CD4-positive, alpha-beta memory T cell (primary cell): ENCODE measurements at regions of chr17 and their contacts with region 1.

Region 1: DNA sequence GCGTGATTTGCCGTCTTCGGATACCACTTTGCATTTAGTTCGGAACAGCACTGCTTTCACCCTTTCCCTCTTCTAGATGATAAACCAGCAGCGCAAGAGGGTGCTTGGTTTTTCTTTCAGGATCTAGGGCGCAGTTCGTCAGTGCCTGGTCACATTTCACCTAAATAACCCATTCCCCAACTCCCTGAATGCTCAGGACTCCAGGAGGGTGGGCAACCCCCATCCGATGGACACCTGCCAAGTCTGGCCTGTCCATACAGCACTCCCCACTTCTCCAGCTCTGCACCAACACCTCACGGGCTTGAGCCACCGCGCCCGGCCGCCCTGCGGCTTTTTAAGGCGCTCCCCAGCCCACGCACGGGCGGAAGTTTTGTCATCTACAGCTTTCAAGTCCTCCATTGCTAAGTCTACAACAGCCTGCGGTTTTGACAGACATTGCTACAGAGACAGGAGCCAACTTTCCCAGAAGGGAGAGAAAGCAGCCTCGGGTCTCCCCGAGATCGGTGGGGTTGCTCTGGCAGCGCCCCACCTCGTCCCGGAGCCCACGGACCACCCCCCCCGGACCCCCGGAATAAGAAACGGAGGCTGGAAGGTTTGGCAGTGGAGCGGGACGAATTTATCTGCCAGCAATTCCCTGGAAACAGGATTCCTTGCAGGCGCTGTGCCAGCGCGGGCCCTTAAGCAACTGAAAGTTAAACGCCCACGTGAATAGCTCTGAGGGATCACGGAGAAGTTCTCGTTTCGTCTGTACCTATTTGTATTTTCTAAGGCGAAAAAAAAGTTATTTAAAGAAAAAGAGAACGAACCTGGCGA is 38.6 kb upstream of the SLFN13 start:
- DNase-seq: peak; percentile 65 to 86 (median 71)
- H3K4me3 ChIP-seq: peak overlapping the region; percentile 57 to 75
- H3K4me3 Mint-ChIP-seq: peak overlapping the region; percentile 94 to 98 (median 96)
- H3K27ac ChIP-seq: peak overlapping the region; percentile 69
- H3K27ac Mint-ChIP-seq: peak overlapping the region; percentile 94 to 99 (median 97)
- H3K4me1 ChIP-seq: peaks cover 42% of the 10 kb centered on the region
- H3K4me1 Mint-ChIP-seq: peaks cover 34 to 89% (median 63%) of the 10 kb centered on the region in 4 donors
- H3K27me3 ChIP-seq: no peaks in the 10 kb centered on the region
- H3K27me3 Mint-ChIP-seq: no peaks in the 10 kb centered on the region

Region 2: DNA sequence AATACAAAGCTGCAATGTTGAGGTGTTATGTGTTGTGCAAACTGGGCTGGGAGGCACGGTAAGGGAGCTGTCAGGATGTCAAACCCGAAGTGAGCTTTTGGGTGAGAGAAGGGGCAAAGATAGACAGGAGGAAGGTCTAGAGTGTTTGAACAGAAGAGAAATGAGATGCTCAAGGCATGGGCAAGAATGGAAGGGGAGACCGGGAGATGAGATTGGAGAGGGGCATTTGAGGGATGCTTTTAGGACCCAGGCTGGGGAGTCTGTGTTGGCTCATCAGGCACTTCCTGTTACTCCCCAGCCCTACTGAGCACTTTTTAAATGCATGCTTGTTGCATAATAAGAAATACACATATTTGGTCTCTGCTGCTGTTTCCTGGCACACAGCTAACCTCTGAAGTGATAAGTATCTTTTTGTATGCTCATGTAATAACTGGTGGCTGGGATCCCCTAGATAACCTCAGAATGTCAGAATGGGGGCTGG is 325.8 kb before region 1 on chr17:
- CTCF ChIA-PET with region 1: interaction called, 3 read pairs
- POLR2A ChIA-PET with region 1: interaction called, 12 read pairs
- intact Hi-C with region 1: loop called (anchors 5 kb)
- DNase-seq: peak; percentile 55 to 65 (median 62)
- H3K4me3 ChIP-seq: peak overlapping the region in 1 of 2 donors; percentile 12
- H3K4me3 Mint-ChIP-seq: peak overlapping the region; percentile 67 to 85 (median 74)
- H3K27ac ChIP-seq: peak overlapping the region; percentile 39
- H3K27ac Mint-ChIP-seq: peak overlapping the region; percentile 84 to 94 (median 93)
- H3K4me1 ChIP-seq: peaks cover 54% of the 10 kb centered on the region
- H3K4me1 Mint-ChIP-seq: peaks cover 38 to 77% (median 59%) of the 10 kb centered on the region in 4 donors
- H3K27me3 ChIP-seq: no peaks in the 10 kb centered on the region
- H3K27me3 Mint-ChIP-seq: no peaks in the 10 kb centered on the region

Region 3: DNA sequence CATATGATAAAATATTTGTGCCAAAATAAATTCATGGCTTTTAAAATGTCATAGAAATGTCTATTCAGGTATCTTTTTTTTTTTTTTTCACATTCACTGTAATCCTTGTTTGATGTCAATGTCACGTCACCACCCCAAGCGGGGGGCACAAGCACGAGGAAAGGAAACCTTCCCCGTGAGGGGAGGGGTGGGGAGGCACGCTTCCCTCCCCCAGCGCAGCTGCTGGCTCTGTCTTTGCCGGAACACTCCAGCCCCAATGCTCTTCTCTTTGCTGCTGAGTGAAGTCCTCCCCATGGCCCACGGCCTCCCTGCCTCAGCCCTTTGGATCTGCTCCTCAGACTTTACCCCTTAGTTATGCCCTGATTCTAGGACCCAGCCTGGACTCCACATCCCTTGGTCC is 294.4 kb before region 1 on chr17:
- CTCF ChIA-PET with region 1: no interaction called
- POLR2A ChIA-PET with region 1: no interaction called
- intact Hi-C with region 1: no loop called
- DNase-seq: no peak
- H3K4me3 ChIP-seq: no peak overlapping the region
- H3K4me3 Mint-ChIP-seq: peak overlapping the region in 1 of 8 donors; percentile 23
- H3K27ac ChIP-seq: no peak overlapping the region
- H3K27ac Mint-ChIP-seq: peak overlapping the region in 3 of 7 donors; percentile 19 to 66 (median 51)
- H3K4me1 ChIP-seq: peaks cover 20% of the 10 kb centered on the region
- H3K4me1 Mint-ChIP-seq: peaks cover 23 to 44% (median 29%) of the 10 kb centered on the region in 4 donors
- H3K27me3 ChIP-seq: no peaks in the 10 kb centered on the region
- H3K27me3 Mint-ChIP-seq: no peaks in the 10 kb centered on the region

Region 4: GRCh38 chr17:35373534-35373983 is 113.6 kb before region 1 on chr17 and contains the start of gene SLFN11:
- CTCF ChIA-PET with region 1: interaction called, 11 read pairs
- POLR2A ChIA-PET with region 1: interaction called, 69 read pairs
- intact Hi-C with region 1: loop called (anchors 2 kb)
- DNase-seq: peak; percentile 83 to 91 (median 83)
- H3K4me3 ChIP-seq: peak within 1 kb of the TSS; percentile 54 to 85
- H3K4me3 Mint-ChIP-seq: peak within 1 kb of the TSS; percentile 96 to 100 (median 99)
- H3K27ac ChIP-seq: peak within 1 kb of the TSS; percentile 98
- H3K27ac Mint-ChIP-seq: peak within 1 kb of the TSS; percentile 99 to 100 (median 100)
- H3K4me1 ChIP-seq: peaks cover 45% of the 10 kb centered on the region
- H3K4me1 Mint-ChIP-seq: peaks cover 32 to 71% (median 50%) of the 10 kb centered on the region in 4 donors
- H3K27me3 ChIP-seq: no peaks in the 10 kb centered on the region
- H3K27me3 Mint-ChIP-seq: no peaks in the 10 kb centered on the region
- total RNA-seq, gene SLFN11: 72.4 to 74.2 TPM

Region 5: GRCh38 chr17:35448214-35448898 is 38.8 kb before region 1 on chr17 and contains the start of gene SLFN13:
- CTCF ChIA-PET with region 1: interaction called, 7 read pairs
- POLR2A ChIA-PET with region 1: interaction called, 46 read pairs
- intact Hi-C with region 1: loop called (anchors 5 kb)
- DNase-seq: peak; percentile 80 to 92 (median 81)
- H3K4me3 ChIP-seq: peak within 1 kb of the TSS; percentile 1 to 62
- H3K4me3 Mint-ChIP-seq: peak within 1 kb of the TSS; percentile 85 to 92 (median 88)
- H3K27ac ChIP-seq: peak within 1 kb of the TSS; percentile 55
- H3K27ac Mint-ChIP-seq: peak within 1 kb of the TSS; percentile 78 to 95 (median 89)
- H3K4me1 ChIP-seq: peaks cover 8% of the 10 kb centered on the region
- H3K4me1 Mint-ChIP-seq: peaks cover 6 to 18% (median 11%) of the 10 kb centered on the region in 4 donors
- H3K27me3 ChIP-seq: no peaks in the 10 kb centered on the region
- H3K27me3 Mint-ChIP-seq: no peaks in the 10 kb centered on the region
- total RNA-seq, gene SLFN13: 24.6 to 27.3 TPM

Region 6: DNA sequence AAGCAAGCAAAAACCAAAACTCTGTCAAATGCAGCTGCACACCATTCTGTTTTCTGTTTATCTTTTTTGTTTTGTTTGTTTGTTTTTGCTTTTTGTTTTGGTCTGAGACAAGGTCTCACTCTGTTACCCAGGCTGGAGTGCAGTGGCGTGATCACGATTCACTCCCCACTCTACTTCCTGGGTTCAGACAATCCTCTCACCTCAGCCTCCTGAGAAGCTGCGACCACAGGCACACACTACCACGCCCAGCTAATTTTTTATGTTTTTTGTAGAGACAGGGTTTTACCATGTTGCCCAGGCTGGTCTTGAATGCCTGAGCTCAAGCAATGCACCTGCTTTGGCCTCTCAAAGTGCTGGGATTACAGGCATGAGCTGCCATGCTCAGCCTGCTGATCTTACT is 19.3 kb before region 1 on chr17:
- CTCF ChIA-PET with region 1: interaction called, 5 read pairs
- POLR2A ChIA-PET with region 1: interaction called, 68 read pairs
- intact Hi-C with region 1: no loop called
- DNase-seq: peak in 4 of 5 donors; percentile 28 to 52 (median 40)
- H3K4me3 ChIP-seq: no peak overlapping the region
- H3K4me3 Mint-ChIP-seq: peak overlapping the region in 7 of 8 donors; percentile 17 to 68 (median 57)
- H3K27ac ChIP-seq: no peak overlapping the region
- H3K27ac Mint-ChIP-seq: peak overlapping the region; percentile 65 to 92 (median 86)
- H3K4me1 ChIP-seq: peaks cover 34% of the 10 kb centered on the region
- H3K4me1 Mint-ChIP-seq: peaks cover 40 to 64% (median 50%) of the 10 kb centered on the region in 4 donors
- H3K27me3 ChIP-seq: no peaks in the 10 kb centered on the region
- H3K27me3 Mint-ChIP-seq: no peaks in the 10 kb centered on the region

Region 7: DNA sequence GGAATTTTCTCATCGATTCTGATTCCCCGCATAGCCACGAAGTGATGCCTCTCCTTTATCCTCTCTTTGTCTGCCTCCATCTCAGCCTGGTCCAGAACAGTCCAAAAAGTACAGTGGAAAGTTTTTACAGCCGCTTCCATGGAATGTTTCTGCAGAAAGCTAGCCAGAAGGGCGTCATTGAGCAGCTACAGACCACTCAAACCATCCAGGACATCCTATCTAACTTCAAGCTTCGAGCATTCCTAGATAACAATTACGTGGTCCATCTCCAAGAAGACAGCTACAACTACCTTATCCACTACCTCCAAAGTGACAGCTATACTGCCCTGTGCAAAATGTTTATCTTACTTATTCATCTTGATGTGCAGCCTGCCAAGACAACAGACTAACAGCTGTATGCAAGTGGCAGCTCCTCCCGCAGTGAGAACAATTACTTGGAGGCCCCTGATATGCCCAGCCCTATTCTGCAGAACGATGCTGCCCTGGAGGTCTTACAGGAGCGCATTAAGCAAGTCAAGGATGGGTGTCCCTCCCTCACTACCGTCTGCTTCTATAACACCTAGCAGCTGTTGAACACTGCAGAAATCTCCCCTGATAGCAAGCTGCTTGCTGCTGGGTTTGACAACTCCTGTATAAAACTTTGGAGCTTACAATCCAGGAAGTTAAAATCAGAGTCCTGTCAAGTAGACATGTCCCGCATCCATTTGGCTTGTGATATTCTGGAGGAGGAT is 11.5 kb after region 1 on chr17:
- CTCF ChIA-PET with region 1: interaction called, 11 read pairs
- POLR2A ChIA-PET with region 1: interaction called, 22 read pairs
- intact Hi-C with region 1: no loop called
- DNase-seq: no peak
- H3K4me3 ChIP-seq: no peak overlapping the region
- H3K4me3 Mint-ChIP-seq: peak overlapping the region in 1 of 8 donors; percentile 26
- H3K27ac ChIP-seq: no peak overlapping the region
- H3K27ac Mint-ChIP-seq: peak overlapping the region; percentile 8 to 74 (median 53)
- H3K4me1 ChIP-seq: peaks cover 35% of the 10 kb centered on the region
- H3K4me1 Mint-ChIP-seq: peaks cover 28 to 68% (median 45%) of the 10 kb centered on the region in 4 donors
- H3K27me3 ChIP-seq: no peaks in the 10 kb centered on the region
- H3K27me3 Mint-ChIP-seq: no peaks in the 10 kb centered on the region

Region 8: DNA sequence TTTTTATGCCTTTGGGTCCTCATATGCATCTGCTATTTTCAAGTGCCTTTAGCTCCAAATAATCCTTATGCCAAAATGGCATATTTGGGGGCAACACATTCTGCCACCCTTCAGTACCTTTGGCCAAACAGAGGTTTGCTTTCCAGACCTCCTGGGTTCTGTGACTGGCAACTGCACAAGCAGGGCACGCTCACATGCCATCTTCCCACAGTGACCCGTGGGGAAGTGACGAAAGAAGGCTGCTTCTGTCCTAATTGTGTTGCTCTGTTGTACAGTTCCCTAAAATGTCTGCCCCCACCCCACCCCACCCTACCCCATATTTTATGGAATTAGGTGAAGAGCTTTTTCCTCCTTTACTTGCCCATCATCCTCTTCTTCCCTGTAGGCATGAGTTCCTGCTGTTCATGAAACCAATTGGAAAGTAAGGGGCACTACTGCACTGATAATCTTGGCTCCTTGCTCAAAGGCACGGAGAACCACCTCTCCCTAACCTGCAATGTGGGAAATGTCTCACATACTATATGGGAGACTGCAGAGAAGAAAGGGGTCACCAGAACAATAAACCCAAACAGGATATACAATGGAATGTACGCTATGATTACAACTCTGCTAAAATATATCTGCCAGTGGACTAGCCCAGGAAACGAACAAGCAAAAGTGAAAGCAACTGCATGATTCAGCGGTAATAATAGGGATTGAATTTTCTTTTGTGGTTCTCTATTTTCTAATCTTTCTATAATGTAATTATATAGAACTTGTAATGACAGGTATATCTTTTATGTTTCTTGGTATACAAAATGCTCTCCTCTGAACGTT is 53.7 kb after region 1 on chr17:
- CTCF ChIA-PET with region 1: interaction called, 117 read pairs
- POLR2A ChIA-PET with region 1: interaction called, 234 read pairs
- intact Hi-C with region 1: no loop called
- DNase-seq: peak in 4 of 5 donors; percentile 43 to 54 (median 50)
- H3K4me3 ChIP-seq: peak overlapping the region; percentile 60 to 79
- H3K4me3 Mint-ChIP-seq: peak overlapping the region; percentile 87 to 98 (median 92)
- H3K27ac ChIP-seq: peak overlapping the region; percentile 74
- H3K27ac Mint-ChIP-seq: peak overlapping the region; percentile 80 to 98 (median 95)
- H3K4me1 ChIP-seq: peaks cover 45% of the 10 kb centered on the region
- H3K4me1 Mint-ChIP-seq: peaks cover 32 to 62% (median 45%) of the 10 kb centered on the region in 4 donors
- H3K27me3 ChIP-seq: no peaks in the 10 kb centered on the region
- H3K27me3 Mint-ChIP-seq: no peaks in the 10 kb centered on the region